Sciatic nerve (tissue), 2 donors: ENCODE measurements at regions of chr7 and their contacts with region 1.

Region 1: GRCh38 chr7:48109848-48110663 is 21.0 kb downstream of the UPP1 start:
- DNase-seq: peak; percentile 90
- ATAC-seq: peak; percentile 81

Region 2: GRCh38 chr7:47945261-47946001 is 164.6 kb before region 1 on chr7:
- intact Hi-C with region 1: loop called (anchors 10 kb)
- DNase-seq: peak; percentile 91
- ATAC-seq: peak; percentile 71

Region 3: DNA sequence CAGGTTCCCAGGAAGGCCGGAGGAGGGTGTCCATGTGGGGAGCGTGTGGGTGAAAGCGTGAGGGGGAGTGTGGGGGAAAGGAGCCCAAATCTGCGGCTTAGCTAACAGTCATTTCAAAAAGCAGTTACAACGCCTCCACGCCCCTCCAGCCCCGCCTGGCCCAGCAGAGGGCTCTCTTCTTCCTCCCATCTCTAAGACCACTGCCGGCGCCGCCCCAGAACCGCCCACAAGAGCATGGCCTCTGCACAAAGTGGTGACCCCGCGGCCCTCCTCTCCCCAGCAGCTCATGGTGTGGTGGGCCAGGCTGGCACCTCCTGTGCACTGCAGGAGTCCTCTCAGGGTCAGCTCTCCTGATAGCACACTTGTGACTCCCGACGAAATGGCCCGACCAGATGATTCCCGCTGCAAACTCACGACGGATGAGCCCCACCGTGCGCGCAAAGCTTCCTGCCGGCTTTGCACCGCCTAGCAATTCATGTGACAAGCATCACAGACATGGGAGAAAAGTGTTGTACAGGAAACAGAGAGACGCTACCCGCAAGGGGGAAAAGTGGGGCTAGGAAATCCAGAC is 118.2 kb before region 1 on chr7:
- intact Hi-C with region 1: loop called (anchors 5 kb)
- DNase-seq: peak; percentile 90
- ATAC-seq: peak; percentile 99